ENCODE measurements at regions of chr4 and their contacts with region 1.

Region 1: GRCh38 chr4:145936142-145936996 is 2.3 kb downstream of the ZNF827 start:
- DNase-seq: peak; percentile 42 to 76 (median 57)
- H3K4me3 ChIP-seq: peak overlapping the region; percentile 58 to 92 (median 79)
- H3K27ac ChIP-seq: peak overlapping the region; percentile 73 to 98 (median 95)
- H3K27me3 ChIP-seq: no peaks in the 10 kb centered on the region
- CTCF ChIP-seq: peak in 23 of 56 donors; percentile 3 to 37 (median 23)

Region 2: GRCh38 chr4:145097821-145098674 is 838.3 kb before region 1 on chr4 and contains the starts of genes ABCE1 and ANAPC10:
- intact Hi-C with region 1: loop called in 1 of 2 experiments (anchors 5 kb)
- DNase-seq: peak; percentile 83 to 94 (median 93)
- H3K4me3 ChIP-seq: peak within 1 kb of the TSS; percentile 63 to 98 (median 87)
- H3K27ac ChIP-seq: peak within 1 kb of the TSS; percentile 68 to 98 (median 89)
- H3K27me3 ChIP-seq: no peaks in the 10 kb centered on the region
- CTCF ChIP-seq: peak in 51 of 56 donors; percentile 8 to 64 (median 39)
- total RNA-seq, gene ABCE1: 28.8 to 60.8 (median 41.8) TPM
- total RNA-seq, gene ANAPC10: 14.7 to 39.8 (median 28.3) TPM

Region 3: DNA sequence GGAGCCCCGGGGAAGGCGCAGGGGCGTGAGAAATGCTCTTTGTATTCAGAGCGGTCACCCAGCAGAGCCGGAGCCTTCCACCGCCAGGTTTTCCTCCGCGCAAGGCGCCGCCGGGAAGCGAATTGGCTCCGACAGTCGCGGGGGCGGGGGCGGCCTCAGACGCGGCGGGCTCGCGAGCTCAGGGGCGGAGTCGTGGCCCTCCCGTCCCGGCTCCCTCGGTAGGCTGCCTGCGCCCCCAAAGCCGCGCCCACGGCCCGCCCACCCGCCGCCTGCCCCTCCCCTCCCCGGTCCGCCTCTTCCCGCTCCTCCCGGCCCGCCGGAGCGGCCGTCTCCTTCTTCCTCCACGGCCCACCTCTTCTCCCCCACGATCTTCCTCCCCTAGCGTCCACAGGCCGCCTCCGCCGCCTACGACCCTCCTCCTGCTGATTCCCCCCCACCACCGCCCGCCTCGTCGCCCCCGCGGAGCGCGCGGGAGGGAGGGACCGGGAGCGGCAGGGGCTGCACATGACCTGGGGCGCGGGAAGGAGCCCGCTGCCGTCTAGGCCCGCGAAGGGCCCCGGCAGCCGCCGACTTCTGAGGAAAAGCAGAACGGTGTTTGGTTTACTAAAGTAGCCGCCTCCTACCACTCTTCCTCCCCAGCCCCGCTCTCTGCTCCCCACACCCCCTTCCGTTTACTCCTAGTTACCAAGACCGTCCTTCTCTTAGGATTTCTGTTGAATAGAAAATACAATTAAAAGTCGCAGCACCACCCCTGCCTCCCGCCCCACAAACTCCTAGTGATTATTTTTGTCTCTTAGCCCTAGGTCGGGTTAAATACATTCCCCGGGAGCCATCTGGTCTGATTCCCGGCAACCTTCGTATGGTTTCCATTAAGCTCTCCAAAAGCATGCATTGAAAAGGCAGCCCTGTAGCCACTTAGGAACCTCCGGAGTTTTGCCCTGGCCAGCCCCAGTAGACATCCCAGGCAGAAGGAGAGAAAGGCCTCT is 203.2 kb before region 1 on chr4:
- intact Hi-C with region 1: loop called (anchors 5 kb)
- DNase-seq: peak; percentile 88 to 97 (median 92)
- H3K4me3 ChIP-seq: peak overlapping the region; percentile 40 to 90 (median 69)
- H3K27ac ChIP-seq: peak overlapping the region; percentile 79 to 98 (median 94)
- H3K27me3 ChIP-seq: no peaks in the 10 kb centered on the region
- CTCF ChIP-seq: peak in 45 of 56 donors; percentile 1 to 59 (median 34)

Region 4: DNA sequence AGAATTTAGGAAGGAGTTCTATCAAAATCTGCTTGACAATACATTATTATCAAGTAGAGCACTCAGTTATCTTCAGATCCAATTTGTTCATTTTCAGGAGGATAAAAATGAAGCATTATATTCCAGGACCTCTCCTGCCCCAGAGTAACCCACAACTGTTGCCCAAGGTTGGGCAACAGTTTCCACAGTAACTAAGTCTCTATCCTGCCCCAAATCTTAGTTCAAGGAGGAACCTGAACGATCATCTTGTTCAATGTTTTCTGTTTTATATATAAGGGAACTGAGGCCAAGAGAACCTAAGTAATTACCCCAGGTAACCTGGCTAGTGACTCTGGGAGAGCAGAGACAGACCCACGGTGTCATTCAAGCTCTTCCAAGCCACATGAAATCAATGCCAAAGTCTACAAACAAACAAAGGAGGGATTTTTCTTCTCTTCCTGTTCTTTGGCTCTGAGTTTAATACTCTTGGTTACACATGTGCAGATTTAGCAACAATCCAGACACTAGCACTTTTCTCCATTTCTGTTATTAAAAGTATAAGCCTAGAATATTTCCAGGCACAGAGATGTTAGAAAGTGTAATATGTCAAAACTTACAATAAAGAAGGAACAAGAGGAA is 150.9 kb before region 1 on chr4:
- intact Hi-C with region 1: no loop called
- DNase-seq: no peak
- H3K4me3 ChIP-seq: no peak overlapping the region
- H3K27ac ChIP-seq: peak overlapping the region in 5 of 59 donors; percentile 1 to 41 (median 19)
- H3K27me3 ChIP-seq: no peaks in the 10 kb centered on the region
- CTCF ChIP-seq: no peak

Region 5: GRCh38 chr4:145840162-145840768 is 96.1 kb before region 1 on chr4:
- intact Hi-C with region 1: loop called in 1 of 2 experiments (anchors 5 kb)
- DNase-seq: no peak
- H3K4me3 ChIP-seq: no peak overlapping the region
- H3K27ac ChIP-seq: peak overlapping the region in 16 of 59 donors; percentile 6 to 75 (median 54)
- H3K27me3 ChIP-seq: no peaks in the 10 kb centered on the region
- CTCF ChIP-seq: peak in 55 of 56 donors; percentile 11 to 74 (median 56)

Region 6: GRCh38 chr4:145881989-145882388 is 54.4 kb before region 1 on chr4:
- intact Hi-C with region 1: loop called (anchors 2 to 5 kb)
- DNase-seq: peak in 1 of 10 donors; percentile 42
- H3K4me3 ChIP-seq: peak overlapping the region in 14 of 59 donors; percentile 6 to 40 (median 21)
- H3K27ac ChIP-seq: peak overlapping the region; percentile 58 to 97 (median 91)
- H3K27me3 ChIP-seq: no peaks in the 10 kb centered on the region
- CTCF ChIP-seq: no peak

Region 7: GRCh38 chr4:146175541-146176453 is 239.4 kb after region 1 on chr4 and contains the start of gene LSM6:
- intact Hi-C with region 1: loop called (anchors 10 kb)
- DNase-seq: peak; percentile 86 to 94 (median 92)
- H3K4me3 ChIP-seq: peak within 1 kb of the TSS; percentile 66 to 100 (median 91)
- H3K27ac ChIP-seq: peak within 1 kb of the TSS; percentile 56 to 97 (median 91)
- H3K27me3 ChIP-seq: no peaks in the 10 kb centered on the region
- CTCF ChIP-seq: peak in 41 of 56 donors; percentile 13 to 57 (median 38)
- total RNA-seq, gene LSM6: 14.6 to 47.4 (median 24.5) TPM